Activated T-helper 1 cell treated with anti-CD3 and anti-CD28 coated beads, Interleukin-12 subunit alpha, Interleukin-12 subunit beta, Interleukin-2, Interleukin-4 antibody, amounts not matched to agents 30 ng/mL and 10 ng/mL and 1 ng/mL, durations not matched to agents 14 hours and 24 hours and 36 hours (primary cell): ENCODE measurements at regions of chr9 and their contacts with region 1.

Region 1: GRCh38 chr9:35732122-35732799 is at the starts of genes CREB3 and TLN1:
- DNase-seq: peak; percentile 98
- H3K4me3 Mint-ChIP-seq: no peak within 1 kb of the TSS
- H3K27ac Mint-ChIP-seq: peak within 1 kb of the TSS; percentile 92
- H3K4me1 Mint-ChIP-seq: peaks cover 22% of the 10 kb centered on the region
- H3K27me3 Mint-ChIP-seq: no peaks in the 10 kb centered on the region
- total RNA-seq, gene CREB3: 32.1 and 32.6 TPM in 2 replicates
- total RNA-seq, gene TLN1: 229 and 230 TPM in 2 replicates

Region 2: DNA sequence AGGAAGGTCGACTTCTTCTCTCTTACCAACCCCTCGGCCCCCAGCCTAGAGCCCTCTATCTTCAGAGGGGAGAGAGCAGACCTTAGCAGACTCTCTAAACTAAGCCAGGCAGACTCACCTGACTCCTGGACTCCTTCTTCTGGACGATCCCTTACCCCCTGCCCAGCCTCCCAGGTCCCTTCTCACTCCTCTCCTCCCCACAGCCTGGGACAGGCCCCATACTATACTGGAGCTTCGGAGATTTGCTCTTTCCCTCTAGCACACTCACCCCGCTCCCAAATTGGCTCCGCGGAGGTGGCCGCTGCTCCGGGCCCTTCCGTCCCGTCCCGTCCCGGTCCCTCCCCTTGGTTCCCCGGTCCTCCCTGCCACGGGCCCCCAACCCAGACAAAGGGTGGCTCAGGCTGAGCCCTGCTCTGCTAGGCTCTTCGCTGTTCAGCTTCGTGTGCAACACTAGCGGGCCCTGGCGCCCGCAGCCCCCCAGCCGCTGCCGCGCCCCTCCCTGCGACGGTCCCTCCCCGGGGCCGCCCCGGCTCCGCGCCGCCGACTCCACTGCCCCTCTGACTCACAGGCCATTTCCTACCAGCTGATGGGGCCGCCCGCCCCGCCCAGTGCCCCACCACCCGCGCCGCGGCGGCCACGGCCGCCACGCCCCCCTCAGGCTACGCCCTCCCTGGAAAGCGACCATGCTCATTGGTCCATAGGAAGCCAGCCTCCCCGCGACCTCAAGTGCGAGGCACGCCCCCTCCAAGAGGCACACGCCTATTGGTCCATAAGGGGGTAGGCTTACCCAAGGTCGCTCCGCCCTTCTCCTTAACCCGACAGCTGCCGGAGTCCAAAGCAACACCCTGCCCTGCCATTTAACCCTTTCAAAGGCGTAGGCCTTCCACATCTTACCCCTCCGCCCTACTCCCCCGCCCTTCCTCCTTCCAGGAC is 621.0 kb before region 1 on chr9:
- intact Hi-C with region 1: loop called (anchors 1 kb)
- DNase-seq: peak; percentile 94
- H3K4me3 Mint-ChIP-seq: peak overlapping the region; percentile 77
- H3K27ac Mint-ChIP-seq: peak overlapping the region; percentile 90
- H3K4me1 Mint-ChIP-seq: peaks cover 61% of the 10 kb centered on the region
- H3K27me3 Mint-ChIP-seq: no peaks in the 10 kb centered on the region

Region 3: DNA sequence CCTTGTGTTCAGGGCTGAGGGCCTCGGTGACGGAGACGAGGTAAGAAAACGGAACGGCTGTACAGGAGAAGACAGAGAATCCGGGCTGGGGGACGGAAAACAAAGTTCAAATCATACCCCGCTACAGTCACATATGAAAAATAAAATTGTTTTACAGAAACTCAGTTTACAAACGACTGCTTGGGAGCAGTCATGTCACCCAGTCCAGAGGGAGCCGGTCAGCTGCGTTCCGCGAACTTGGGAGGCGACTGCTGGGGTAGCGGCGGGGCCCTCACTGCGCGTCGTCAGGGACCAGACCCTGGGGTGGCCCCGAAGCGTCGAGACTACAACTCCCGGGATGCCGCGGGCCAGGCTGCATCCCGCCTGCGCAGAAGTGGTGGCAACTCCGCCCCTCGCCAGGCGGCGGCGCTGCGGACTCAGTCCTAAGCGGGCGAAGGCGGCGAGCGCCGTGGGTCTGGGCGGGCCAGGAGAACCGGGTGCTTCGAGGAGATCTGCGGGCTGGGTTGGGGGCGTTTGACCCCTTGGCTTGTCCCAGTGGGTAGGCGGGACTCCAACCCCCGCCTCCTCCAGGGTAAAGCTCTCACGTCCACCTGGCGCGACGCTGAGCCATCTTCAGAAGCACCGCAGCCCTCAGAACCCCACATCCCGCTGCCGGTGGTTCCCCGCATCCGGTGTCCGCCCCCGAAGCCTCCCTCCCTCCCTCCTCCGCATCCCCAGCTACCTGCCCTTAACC is 85.6 kb before region 1 on chr9:
- intact Hi-C with region 1: loop called (anchors 1 kb)
- DNase-seq: peak; percentile 91
- H3K4me3 Mint-ChIP-seq: peak overlapping the region; percentile 92
- H3K27ac Mint-ChIP-seq: peak overlapping the region; percentile 93
- H3K4me1 Mint-ChIP-seq: peaks cover 49% of the 10 kb centered on the region
- H3K27me3 Mint-ChIP-seq: peaks cover 1% of the 10 kb centered on the region

Region 4: GRCh38 chr9:35696525-35697215 is 35.6 kb before region 1 on chr9:
- intact Hi-C with region 1: loop called (anchors 2 kb)
- DNase-seq: peak; percentile 23
- H3K4me3 Mint-ChIP-seq: no peak overlapping the region
- H3K27ac Mint-ChIP-seq: no peak overlapping the region
- H3K4me1 Mint-ChIP-seq: peaks cover 5% of the 10 kb centered on the region
- H3K27me3 Mint-ChIP-seq: no peaks in the 10 kb centered on the region

Region 5: GRCh38 chr9:35814841-35815543 is 82.7 kb after region 1 on chr9 and contains the start of gene HINT2:
- intact Hi-C with region 1: loop called (anchors 1 kb)
- DNase-seq: peak; percentile 97
- H3K4me3 Mint-ChIP-seq: peak within 1 kb of the TSS; percentile 91
- H3K27ac Mint-ChIP-seq: peak within 1 kb of the TSS; percentile 96
- H3K4me1 Mint-ChIP-seq: peaks cover 31% of the 10 kb centered on the region
- H3K27me3 Mint-ChIP-seq: peaks cover 6% of the 10 kb centered on the region
- total RNA-seq, gene HINT2: 47.5 and 55.3 TPM in 2 replicates

Region 6: DNA sequence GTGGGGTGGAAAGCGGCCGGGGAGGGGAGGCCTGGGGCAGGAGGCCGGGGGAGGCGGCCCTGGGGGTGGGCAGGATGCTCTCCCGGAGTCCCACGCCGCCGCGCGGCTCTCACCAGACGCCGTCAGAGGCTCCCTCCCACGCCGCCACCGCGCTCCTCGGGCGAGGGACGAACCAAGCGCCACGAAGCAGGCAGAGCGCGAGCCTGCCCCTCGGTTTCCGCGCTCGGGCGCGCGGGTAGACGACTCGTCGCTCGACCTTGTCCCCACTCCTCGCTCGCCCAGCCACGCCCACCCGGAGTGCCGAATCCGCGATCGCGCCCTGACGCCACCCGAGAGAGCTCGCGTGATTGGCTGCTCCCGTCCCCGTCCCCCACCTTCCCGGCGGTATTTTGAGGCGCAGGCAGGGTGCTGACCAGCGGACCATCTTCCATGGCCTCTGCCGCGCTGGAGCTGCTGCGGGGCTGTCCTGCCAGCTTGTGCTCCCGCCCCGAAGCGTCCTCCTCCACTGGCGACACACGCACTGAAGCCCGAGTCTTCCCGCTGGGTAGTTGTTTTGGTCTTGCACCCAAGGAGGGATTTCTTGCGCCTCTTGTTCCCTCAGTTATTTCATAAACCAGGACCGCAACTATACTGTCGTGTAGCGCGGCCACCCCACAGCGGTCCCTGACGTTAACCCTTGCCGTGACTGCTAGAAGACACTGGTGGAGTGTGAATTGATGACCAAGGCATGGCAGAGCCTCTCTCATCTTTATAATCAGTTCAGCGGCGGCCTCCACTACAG is 526.1 kb after region 1 on chr9 and contains the start of gene GNE:
- intact Hi-C with region 1: loop called (anchors 1 kb)
- DNase-seq: peak; percentile 98
- H3K4me3 Mint-ChIP-seq: peak within 1 kb of the TSS; percentile 96
- H3K27ac Mint-ChIP-seq: peak within 1 kb of the TSS; percentile 96
- H3K4me1 Mint-ChIP-seq: peaks cover 15% of the 10 kb centered on the region
- H3K27me3 Mint-ChIP-seq: no peaks in the 10 kb centered on the region
- total RNA-seq, gene GNE: 21.7 and 22.7 TPM in 2 replicates